CD14-positive monocyte (primary cell): ENCODE measurements at regions of chr16 and their contacts with region 1.

Region 1: DNA sequence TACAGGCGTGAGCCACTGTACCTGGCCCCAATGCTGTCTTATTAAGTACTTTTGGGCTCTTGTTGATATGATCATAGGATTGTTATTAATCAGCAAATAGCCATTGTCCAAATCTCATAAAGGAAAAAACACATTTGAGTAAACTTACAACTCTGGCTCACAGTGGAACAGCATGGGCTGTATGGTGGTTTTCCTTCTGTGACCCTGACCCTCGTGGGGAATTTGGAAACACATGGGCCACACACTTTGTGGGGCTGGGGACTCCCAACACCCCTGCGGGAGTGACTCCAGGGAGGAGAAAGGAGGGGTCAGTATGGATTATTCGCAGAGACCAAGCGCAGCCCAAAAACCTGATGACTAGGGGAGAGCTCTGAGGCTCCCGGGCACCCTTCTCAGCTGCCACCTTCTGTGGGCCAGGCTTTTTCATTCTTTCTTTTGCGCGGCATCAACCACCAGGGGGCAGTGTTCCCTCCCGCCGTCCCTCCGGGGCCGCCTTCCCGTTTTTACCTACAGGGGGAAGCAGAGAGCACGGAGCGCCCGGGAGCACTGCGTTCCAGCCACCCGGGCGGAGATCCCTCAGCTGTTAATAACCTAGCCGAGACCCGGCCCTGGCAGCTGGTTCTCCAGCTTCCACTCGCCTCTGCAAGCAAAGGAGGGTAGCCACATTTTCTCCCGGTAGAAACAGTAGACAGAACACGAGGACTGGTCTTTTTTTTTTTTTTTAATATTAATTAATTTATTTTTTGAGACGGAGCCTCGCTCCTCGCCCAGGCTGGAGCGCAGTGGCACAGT is 9.7 kb downstream of the TSNAXIP1 start:
- DNase-seq: peak; percentile 77 to 82 (median 79)
- H3K4me3 ChIP-seq: no peak overlapping the region
- H3K4me3 Mint-ChIP-seq: no peak overlapping the region
- H3K27ac ChIP-seq: no peak overlapping the region
- H3K27ac Mint-ChIP-seq: peak overlapping the region in 1 of 7 donors; percentile 37
- H3K4me1 ChIP-seq: no peaks in the 10 kb centered on the region
- H3K4me1 Mint-ChIP-seq: peaks cover 2% of the 10 kb centered on the region
- H3K27me3 ChIP-seq: no peaks in the 10 kb centered on the region
- H3K27me3 Mint-ChIP-seq: peaks cover 0 to 6% (median 3%) of the 10 kb centered on the region in 3 donors
- CTCF ChIP-seq: peak; percentile 100

Region 2: DNA sequence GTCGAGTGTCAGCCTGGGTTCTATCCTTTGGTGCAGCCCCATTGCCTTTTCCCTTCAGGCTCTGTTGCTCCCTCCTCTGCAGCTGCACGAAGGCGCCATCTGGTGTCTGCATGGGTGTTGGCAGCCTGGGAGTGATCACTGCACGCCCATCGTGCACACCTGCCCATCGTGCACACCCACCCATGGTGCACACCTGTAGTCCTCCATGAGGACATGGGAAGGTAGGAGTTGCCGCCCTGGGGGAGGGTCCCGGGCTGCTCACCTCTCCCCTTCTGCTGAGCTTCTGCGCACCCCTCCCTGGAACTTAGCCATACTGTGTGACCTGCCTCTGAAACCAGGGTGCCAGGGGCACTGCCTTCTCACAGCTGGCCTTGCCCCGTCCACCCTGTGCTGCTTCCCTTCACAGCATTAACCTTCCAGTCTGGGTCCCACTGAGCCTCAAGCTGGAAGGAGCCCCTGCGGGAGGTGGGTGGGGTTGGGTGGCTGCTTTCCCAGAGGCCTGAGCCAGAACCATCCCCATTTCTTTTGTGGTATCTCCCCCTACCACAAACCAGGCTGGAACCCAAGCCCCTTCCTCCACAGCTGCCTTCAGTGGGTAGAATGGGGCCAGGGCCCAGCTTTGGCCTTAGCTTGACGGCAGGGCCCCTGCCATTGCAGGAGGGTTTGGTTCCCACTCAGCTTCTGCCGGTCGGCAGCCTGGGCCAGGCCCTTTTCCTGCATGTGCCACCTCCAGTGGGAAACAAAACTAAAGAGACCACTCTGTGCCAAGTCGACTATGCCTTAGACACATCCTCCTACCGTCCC is 112.3 kb after region 1 on chr16:
- intact Hi-C with region 1: loop called (anchors 5 to 10 kb)
- DNase-seq: peak; percentile 30 to 51 (median 36)
- H3K4me3 ChIP-seq: no peak overlapping the region
- H3K4me3 Mint-ChIP-seq: no peak overlapping the region
- H3K27ac ChIP-seq: no peak overlapping the region
- H3K27ac Mint-ChIP-seq: peak overlapping the region in 3 of 7 donors; percentile 7 to 23 (median 20)
- H3K4me1 ChIP-seq: no peaks in the 10 kb centered on the region
- H3K4me1 Mint-ChIP-seq: no peaks in the 10 kb centered on the region
- H3K27me3 ChIP-seq: no peaks in the 10 kb centered on the region
- H3K27me3 Mint-ChIP-seq: peaks cover 0 to 2% (median 0%) of the 10 kb centered on the region in 3 donors
- CTCF ChIP-seq: peak; percentile 92

Region 3: DNA sequence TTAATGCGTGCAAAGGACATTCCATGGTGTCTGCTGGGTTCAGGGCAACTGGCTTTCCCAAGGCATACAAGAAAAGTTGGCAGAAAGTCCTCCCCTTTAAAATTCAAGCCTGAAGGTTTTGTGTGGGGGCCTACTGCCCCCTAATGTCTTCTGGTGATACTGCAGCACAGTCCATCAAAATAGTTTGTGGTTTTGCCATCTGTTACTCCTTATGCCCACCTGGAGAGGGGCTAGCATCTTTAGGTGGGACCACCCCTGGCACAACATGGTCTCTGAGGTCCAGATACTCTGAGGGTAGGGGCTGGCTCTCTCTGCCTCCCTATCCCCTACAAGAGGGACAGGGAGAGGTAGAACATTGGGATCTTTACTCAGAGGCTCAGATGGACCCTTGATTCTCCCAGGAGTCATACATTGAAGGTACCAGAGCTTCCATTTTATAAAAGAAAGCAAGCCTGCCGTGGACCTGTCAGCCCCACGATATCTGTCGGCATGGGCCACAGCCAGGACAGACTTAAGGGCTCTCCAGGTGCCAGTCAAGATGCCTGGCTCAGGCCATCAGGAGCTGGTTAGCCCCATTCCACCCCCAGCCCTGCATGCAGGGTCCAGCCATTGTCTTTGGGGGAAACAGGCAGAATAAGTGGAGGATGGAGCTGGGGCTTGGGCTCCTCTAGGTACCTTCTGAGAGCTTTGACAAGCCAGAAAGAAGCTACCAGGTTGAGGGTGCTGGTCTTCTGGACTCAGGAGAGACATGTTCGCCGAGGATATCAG is 413.2 kb after region 1 on chr16:
- intact Hi-C with region 1: loop called in 1 of 2 experiments (anchors 5 kb)
- DNase-seq: peak in 2 of 3 donors; percentile 25 to 31
- H3K4me3 ChIP-seq: no peak overlapping the region
- H3K4me3 Mint-ChIP-seq: no peak overlapping the region
- H3K27ac ChIP-seq: no peak overlapping the region
- H3K27ac Mint-ChIP-seq: peak overlapping the region in 1 of 7 donors; percentile 66
- H3K4me1 ChIP-seq: peaks cover 0 to 10% of the 10 kb centered on the region in 2 donors
- H3K4me1 Mint-ChIP-seq: peaks cover 9% of the 10 kb centered on the region
- H3K27me3 ChIP-seq: peaks cover 0 to 9% of the 10 kb centered on the region in 2 donors
- H3K27me3 Mint-ChIP-seq: peaks cover 4 to 8% (median 5%) of the 10 kb centered on the region in 3 donors
- CTCF ChIP-seq: peak; percentile 86